ENCODE measurements at regions of chr3 and their contacts with region 1.

Region 1: GRCh38 chr3:105518806-105519418 is 152.2 kb downstream of the ALCAM start:
- DNase-seq: peak; percentile 78
- H3K4me3 ChIP-seq: no peak overlapping the region
- H3K27ac ChIP-seq: no peak overlapping the region
- H3K4me1 ChIP-seq: no peaks in the 10 kb centered on the region
- H3K27me3 ChIP-seq: no peaks in the 10 kb centered on the region
- CTCF ChIP-seq: peak; percentile 32 to 43
- POLR2A ChIP-seq: no peak

Region 2: GRCh38 chr3:103991461-103992115 is 1527.3 kb before region 1 on chr3:
- CTCF ChIA-PET with region 1: interaction called, 5 read pairs
- POLR2A ChIA-PET with region 1: no interaction called
- dilution Hi-C with region 1: no loop called
- intact Hi-C with region 1: loop called (anchors 5 kb)
- DNase-seq: peak; percentile 17
- H3K4me3 ChIP-seq: no peak overlapping the region
- H3K27ac ChIP-seq: no peak overlapping the region
- H3K4me1 ChIP-seq: no peaks in the 10 kb centered on the region
- H3K27me3 ChIP-seq: no peaks in the 10 kb centered on the region
- CTCF ChIP-seq: peak; percentile 47
- POLR2A ChIP-seq: no peak

Region 3: GRCh38 chr3:104273046-104273649 is 1245.8 kb before region 1 on chr3:
- CTCF ChIA-PET with region 1: interaction called, 40 read pairs
- POLR2A ChIA-PET with region 1: no interaction called
- dilution Hi-C with region 1: no loop called
- intact Hi-C with region 1: loop called (anchors 1 kb)
- DNase-seq: peak; percentile 34
- H3K4me3 ChIP-seq: no peak overlapping the region
- H3K27ac ChIP-seq: no peak overlapping the region
- H3K4me1 ChIP-seq: no peaks in the 10 kb centered on the region
- H3K27me3 ChIP-seq: peaks cover 0 to 2% of the 10 kb centered on the region in 2 experiments
- CTCF ChIP-seq: peak; percentile 47 to 57
- POLR2A ChIP-seq: no peak

Region 4: GRCh38 chr3:104596551-104596950 is 922.4 kb before region 1 on chr3:
- CTCF ChIA-PET with region 1: interaction called, 34 read pairs
- POLR2A ChIA-PET with region 1: no interaction called
- dilution Hi-C with region 1: no loop called
- intact Hi-C with region 1: loop called (anchors 2 kb)
- DNase-seq: peak; percentile 68
- H3K4me3 ChIP-seq: no peak overlapping the region
- H3K27ac ChIP-seq: no peak overlapping the region
- H3K4me1 ChIP-seq: no peaks in the 10 kb centered on the region
- H3K27me3 ChIP-seq: no peaks in the 10 kb centered on the region
- CTCF ChIP-seq: peak; percentile 42 to 49
- POLR2A ChIP-seq: no peak

Region 5: GRCh38 chr3:104909198-104909597 is 609.7 kb before region 1 on chr3:
- CTCF ChIA-PET with region 1: no interaction called
- POLR2A ChIA-PET with region 1: no interaction called
- dilution Hi-C with region 1: no loop called
- intact Hi-C with region 1: loop called (anchors 5 kb)
- DNase-seq: peak; percentile 85
- H3K4me3 ChIP-seq: peak overlapping the region in 1 of 3 experiments; percentile 52
- H3K27ac ChIP-seq: peak overlapping the region; percentile 99
- H3K4me1 ChIP-seq: peaks cover 29% of the 10 kb centered on the region
- H3K27me3 ChIP-seq: no peaks in the 10 kb centered on the region
- CTCF ChIP-seq: no peak
- POLR2A ChIP-seq: peak; percentile 31

Region 6: DNA sequence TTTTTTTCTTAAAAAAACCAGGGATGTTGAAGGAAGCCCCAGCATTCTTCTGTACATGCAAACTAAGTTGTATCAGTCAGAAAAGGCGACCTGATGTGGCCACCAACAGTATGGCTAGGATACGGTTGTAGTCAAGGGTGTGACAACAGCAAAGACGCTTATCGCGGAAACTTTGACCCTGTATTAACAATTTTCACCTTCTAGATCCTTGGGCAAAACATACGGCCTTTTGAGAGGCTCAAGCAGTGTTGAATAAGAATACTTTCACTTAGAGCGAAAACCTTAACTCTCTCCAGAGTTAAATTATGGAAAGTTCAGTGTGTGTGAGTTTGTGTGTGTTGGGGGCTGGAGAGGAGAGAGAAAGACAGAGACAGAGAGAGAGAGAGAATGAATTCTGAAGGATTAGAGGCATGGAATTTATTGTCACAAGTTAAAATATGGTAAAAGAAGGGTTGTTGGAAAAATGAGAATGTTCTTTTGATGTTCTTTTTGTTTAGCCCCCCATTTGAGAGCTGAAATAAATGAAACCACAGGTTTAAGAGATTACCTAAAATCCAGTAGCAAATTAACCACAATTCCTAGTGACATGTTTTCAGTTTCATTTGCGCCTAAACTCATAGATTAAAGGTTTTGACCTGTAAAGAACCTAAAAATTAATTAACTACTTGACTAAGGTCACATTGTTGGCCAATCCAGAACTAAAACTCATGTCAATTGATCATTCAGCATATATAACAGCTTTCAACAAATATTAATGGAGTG is 143.0 kb before region 1 on chr3:
- CTCF ChIA-PET with region 1: interaction called, 12 read pairs
- POLR2A ChIA-PET with region 1: no interaction called
- dilution Hi-C with region 1: no loop called
- intact Hi-C with region 1: no loop called
- DNase-seq: no peak
- H3K4me3 ChIP-seq: no peak overlapping the region
- H3K27ac ChIP-seq: no peak overlapping the region
- H3K4me1 ChIP-seq: no peaks in the 10 kb centered on the region
- H3K27me3 ChIP-seq: no peaks in the 10 kb centered on the region
- CTCF ChIP-seq: no peak
- POLR2A ChIP-seq: no peak

Region 7: GRCh38 chr3:105823149-105823869 is 304.4 kb after region 1 on chr3:
- CTCF ChIA-PET with region 1: no interaction called
- POLR2A ChIA-PET with region 1: no interaction called
- dilution Hi-C with region 1: no loop called
- intact Hi-C with region 1: no loop called
- DNase-seq: peak; percentile 63
- H3K4me3 ChIP-seq: no peak overlapping the region
- H3K27ac ChIP-seq: peak overlapping the region; percentile 35
- H3K4me1 ChIP-seq: peaks cover 12% of the 10 kb centered on the region
- H3K27me3 ChIP-seq: no peaks in the 10 kb centered on the region
- CTCF ChIP-seq: no peak
- POLR2A ChIP-seq: no peak

Measured in endothelial cell of umbilical vein (primary cell).